Ascending aorta (tissue), 2 donors: ENCODE measurements at regions of chr11 and their contacts with region 1.

Region 1: DNA sequence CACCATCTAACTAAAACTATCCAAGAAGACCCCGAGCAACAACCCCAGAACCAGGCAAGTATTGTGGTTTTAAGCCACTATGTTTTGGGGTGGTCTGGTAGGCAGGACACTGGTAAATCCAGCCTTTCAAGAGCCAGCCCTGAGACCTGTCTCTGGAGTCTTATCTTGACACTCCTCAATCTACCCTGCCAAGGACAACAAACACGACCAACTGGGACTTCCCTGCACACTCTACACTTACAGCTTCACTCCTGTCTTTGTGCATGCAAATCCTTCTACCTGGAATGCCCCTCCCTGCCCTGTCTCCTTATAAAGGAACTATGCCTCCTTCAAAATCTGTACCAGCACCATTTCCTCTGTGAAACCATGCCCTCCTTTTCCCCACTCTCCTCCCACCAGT is 107.3 kb downstream of the RPL27A start:
- DNase-seq: no peak
- H3K4me3 ChIP-seq: no peak overlapping the region
- H3K27ac ChIP-seq: peak overlapping the region in 1 of 2 donors; percentile 25
- H3K4me1 ChIP-seq: peaks cover 0 to 10% of the 10 kb centered on the region in 2 donors
- H3K27me3 ChIP-seq: no peaks in the 10 kb centered on the region
- CTCF ChIP-seq: no peak

Region 2: GRCh38 chr11:8807544-8808225 is 17.8 kb after region 1 on chr11:
- intact Hi-C with region 1: loop called (anchors 2 kb)
- DNase-seq: peak in 1 of 2 donors; percentile 78
- H3K4me3 ChIP-seq: peak overlapping the region; percentile 60 to 66
- H3K27ac ChIP-seq: peak overlapping the region; percentile 81 to 89
- H3K4me1 ChIP-seq: peaks cover 19 to 35% of the 10 kb centered on the region in 2 donors
- H3K27me3 ChIP-seq: no peaks in the 10 kb centered on the region
- CTCF ChIP-seq: no peak

Region 3: DNA sequence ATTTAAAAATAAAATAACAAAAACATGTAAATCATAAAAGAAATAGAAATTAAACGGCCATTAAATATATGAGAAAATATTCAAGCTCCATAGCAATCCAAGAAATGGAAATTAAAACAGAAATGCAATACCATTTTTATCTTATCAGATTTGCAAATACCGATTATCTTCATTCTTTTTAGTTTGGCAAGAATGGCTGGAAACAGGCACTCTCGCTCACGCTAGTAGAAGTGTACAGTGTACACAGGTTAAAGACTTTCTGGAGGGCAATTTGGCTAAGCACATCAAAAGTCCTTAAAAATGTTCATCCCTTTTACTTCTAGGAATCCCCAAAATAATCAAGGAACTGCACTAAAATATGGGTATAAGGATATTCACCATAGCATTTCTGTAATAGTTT is 61.5 kb after region 1 on chr11:
- intact Hi-C with region 1: no loop called
- DNase-seq: no peak
- H3K4me3 ChIP-seq: no peak overlapping the region
- H3K27ac ChIP-seq: no peak overlapping the region
- H3K4me1 ChIP-seq: no peaks in the 10 kb centered on the region
- H3K27me3 ChIP-seq: no peaks in the 10 kb centered on the region
- CTCF ChIP-seq: no peak